ENCODE measurements at regions of chr1 and their contacts with region 1.

Region 1: DNA sequence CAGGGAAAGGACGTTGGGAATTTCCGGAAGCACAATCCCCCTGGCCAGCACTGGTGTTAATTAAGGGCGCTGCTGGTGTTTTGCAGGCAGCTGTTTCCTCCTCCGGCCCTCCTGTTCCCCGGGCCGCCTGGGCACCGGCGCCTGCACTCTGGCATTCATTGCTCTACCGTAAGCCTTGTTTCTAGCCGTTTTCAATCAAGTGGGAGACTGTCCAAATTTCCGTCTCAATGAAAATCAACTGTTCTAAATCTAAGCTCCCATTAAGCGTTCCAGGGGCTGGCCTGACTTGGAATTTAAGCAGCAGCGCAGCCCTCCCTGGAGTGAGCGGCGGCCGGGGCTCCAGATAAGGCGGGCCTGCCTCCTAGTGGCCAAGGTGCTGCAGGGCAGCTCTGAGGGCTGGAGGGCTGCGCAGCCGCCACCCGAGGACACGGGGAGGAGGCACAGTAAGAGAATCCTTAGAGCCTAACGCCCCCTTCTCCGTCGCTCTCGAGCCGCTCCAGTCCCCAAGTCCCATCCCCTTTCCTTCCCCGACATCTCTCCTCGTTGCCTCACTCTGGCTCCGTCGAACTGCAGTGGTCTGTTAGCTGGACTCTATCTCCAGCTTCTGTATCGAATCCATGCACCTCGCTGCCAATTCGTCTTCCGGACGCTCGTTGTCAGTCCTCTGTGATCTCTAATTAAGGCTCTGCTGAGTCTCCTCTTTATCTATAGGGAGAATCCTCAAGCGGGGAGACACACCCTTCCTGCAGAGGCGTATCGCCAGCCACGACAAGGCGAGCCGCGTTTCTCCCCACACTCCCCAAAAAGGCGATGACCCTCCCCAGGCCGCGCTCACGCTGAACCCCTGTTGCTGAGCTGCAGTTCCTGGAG is 57.8 kb upstream of the LRRC8D start:
- DNase-seq: peak; percentile 73
- H3K4me3 ChIP-seq: peak overlapping the region; percentile 70
- H3K27ac ChIP-seq: no peak overlapping the region
- H3K27me3 ChIP-seq: no peaks in the 10 kb centered on the region
- CTCF ChIP-seq: peak; percentile 100

Region 2: DNA sequence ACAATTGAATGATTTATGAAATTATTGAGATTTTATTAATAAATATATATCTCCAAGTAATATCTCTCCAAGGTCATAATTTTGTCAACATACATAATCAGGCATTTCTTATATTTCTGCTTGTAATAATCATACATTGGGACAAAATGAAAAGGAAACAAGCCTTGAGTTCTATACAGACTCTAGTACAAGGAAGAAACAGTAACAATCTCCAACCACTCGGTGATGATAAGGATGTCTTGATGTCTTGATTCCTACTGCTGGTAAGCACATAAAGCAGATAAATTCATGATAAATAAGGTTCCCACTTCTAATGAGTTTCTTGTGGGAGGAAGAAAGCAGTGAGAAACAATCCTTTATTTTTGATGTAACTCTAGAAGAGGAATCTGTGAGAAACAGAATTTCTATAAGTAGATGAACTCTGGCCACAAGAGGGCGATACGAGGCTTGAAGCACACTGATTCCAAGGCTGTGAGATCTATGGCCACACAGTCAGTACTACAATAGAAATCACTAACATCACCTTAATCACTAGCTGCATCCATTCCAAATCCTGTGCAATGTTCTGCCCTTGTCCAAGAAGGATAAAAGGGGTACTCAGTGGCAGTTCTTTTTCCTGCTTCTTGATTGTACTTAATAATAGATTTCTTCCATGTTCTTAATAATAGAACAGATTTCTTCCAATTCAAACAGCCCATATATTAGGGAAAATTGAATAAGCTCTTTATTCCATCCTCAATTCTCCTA is 279.8 kb before region 1 on chr1:
- CTCF ChIA-PET with region 1: interaction called, 161 read pairs
- POLR2A ChIA-PET with region 1: no interaction called
- DNase-seq: peak; percentile 66
- H3K4me3 ChIP-seq: no peak overlapping the region
- H3K27ac ChIP-seq: no peak overlapping the region
- H3K27me3 ChIP-seq: no peaks in the 10 kb centered on the region
- CTCF ChIP-seq: peak; percentile 82

Region 3: GRCh38 chr1:89622895-89623294 is 140.1 kb before region 1 on chr1:
- CTCF ChIA-PET with region 1: interaction called, 207 read pairs
- POLR2A ChIA-PET with region 1: no interaction called
- DNase-seq: no peak
- H3K4me3 ChIP-seq: no peak overlapping the region
- H3K27ac ChIP-seq: no peak overlapping the region
- H3K27me3 ChIP-seq: no peaks in the 10 kb centered on the region
- CTCF ChIP-seq: peak; percentile 41

Region 4: GRCh38 chr1:89670163-89670562 is 92.9 kb before region 1 on chr1:
- CTCF ChIA-PET with region 1: interaction called, 15 read pairs
- POLR2A ChIA-PET with region 1: no interaction called
- DNase-seq: no peak
- H3K4me3 ChIP-seq: no peak overlapping the region
- H3K27ac ChIP-seq: no peak overlapping the region
- H3K27me3 ChIP-seq: no peaks in the 10 kb centered on the region
- CTCF ChIP-seq: no peak

Region 5: DNA sequence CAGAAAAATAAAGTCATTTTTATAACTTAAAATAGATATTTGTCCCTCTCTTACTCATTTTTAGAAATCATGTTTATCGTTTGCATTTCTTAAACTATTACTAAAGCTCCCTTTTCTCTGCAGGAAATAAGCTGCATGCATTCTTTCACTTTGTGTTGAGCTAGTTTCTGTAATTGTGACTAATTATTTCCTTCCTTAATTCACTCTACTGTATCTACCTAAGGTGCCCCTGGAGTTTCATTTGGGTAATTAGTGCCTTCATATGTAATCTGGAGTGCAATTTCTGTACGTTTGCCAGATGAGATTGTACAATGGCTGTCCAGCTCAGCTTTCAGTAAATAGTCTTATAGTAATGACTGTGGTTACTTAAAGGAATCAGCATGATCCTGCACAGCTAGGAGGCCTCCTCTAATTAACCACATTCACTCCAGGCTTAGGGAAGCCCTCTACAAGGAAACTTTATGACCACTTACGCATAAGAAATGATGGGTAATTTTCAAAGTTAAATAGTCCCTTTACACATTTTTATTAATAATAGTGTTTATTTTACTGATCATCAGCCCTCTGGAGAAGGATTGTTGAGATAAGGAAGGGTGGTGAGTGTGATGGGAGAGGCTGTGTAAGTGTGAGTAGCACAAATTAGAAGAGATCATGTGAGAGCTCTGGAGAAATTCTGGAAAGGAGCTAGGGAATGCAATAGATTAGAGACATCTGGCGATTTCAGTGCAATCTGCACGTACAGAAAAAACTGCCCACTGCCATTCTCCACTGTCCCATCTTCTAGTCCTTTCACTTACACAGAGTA is 43.3 kb before region 1 on chr1:
- CTCF ChIA-PET with region 1: interaction called, 32 read pairs
- POLR2A ChIA-PET with region 1: no interaction called
- DNase-seq: no peak
- H3K4me3 ChIP-seq: peak overlapping the region; percentile 40
- H3K27ac ChIP-seq: no peak overlapping the region
- H3K27me3 ChIP-seq: no peaks in the 10 kb centered on the region
- CTCF ChIP-seq: no peak

Region 6: GRCh38 chr1:89786628-89787214 is 23.7 kb after region 1 on chr1:
- CTCF ChIA-PET with region 1: interaction called, 36 read pairs
- POLR2A ChIA-PET with region 1: no interaction called
- DNase-seq: no peak
- H3K4me3 ChIP-seq: no peak overlapping the region
- H3K27ac ChIP-seq: no peak overlapping the region
- H3K27me3 ChIP-seq: peaks cover 6% of the 10 kb centered on the region
- CTCF ChIP-seq: no peak